ENCODE measurements at regions of chr10 and their contacts with region 1.

Region 1: DNA sequence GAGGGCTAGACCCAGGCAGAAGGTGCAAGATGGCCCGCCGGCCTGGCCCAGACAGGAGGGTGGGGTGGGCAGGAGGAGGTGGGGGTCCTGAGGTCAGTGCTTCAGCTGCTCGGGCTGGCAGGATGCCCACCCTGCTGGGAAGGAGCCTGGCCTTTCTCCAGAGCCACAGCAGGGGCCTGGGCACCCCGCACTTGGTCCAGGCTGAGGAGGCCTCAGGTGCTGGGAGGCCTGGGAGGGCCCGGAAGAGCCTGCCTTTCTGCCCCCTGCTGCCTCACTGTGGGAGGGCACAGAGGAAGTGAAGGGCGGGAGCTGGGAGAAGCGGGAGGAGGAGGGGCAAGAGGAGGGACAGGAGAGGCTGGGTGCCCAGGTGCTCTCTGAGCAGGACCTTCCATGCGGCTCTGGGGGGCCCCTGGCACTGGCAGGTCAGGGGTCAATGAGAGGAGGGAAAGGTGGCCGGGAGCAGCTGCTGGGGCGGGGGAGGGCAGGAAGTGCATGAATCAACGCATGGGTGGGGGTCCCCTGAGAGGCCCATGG is 49.7 kb downstream of the PWWP2B start:
- DNase-seq: peak; percentile 31 to 89 (median 73)
- ATAC-seq: peak; percentile 36
- H3K4me3 ChIP-seq: peak overlapping the region; percentile 43 to 53
- H3K4me3 Mint-ChIP-seq: peak overlapping the region; percentile 71
- H3K27ac ChIP-seq: peak overlapping the region; percentile 87 to 99
- H3K27ac Mint-ChIP-seq: peak overlapping the region; percentile 98
- H3K4me1 ChIP-seq: peaks cover 58% of the 10 kb centered on the region
- H3K4me1 Mint-ChIP-seq: peaks cover 52% of the 10 kb centered on the region
- H3K27me3 ChIP-seq: no peaks in the 10 kb centered on the region
- H3K27me3 Mint-ChIP-seq: no peaks in the 10 kb centered on the region
- CTCF ChIP-seq: peak; percentile 30

Region 2: GRCh38 chr10:132396495-132397035 is 50.2 kb before region 1 on chr10:
- CTCF ChIA-PET with region 1: interaction called, 5 read pairs
- POLR2A ChIA-PET with region 1: interaction called, 12 read pairs
- intact Hi-C with region 1: loop called in 1 of 2 experiments (anchors 1 kb)
- DNase-seq: peak in 8 of 9 experiments; percentile 49 to 87 (median 66)
- ATAC-seq: peak; percentile 72
- H3K4me3 ChIP-seq: peak overlapping the region; percentile 30 to 34
- H3K4me3 Mint-ChIP-seq: no peak overlapping the region
- H3K27ac ChIP-seq: peak overlapping the region; percentile 37 to 57
- H3K27ac Mint-ChIP-seq: no peak overlapping the region
- H3K4me1 ChIP-seq: peaks cover 12% of the 10 kb centered on the region
- H3K4me1 Mint-ChIP-seq: peaks cover 22% of the 10 kb centered on the region
- H3K27me3 ChIP-seq: no peaks in the 10 kb centered on the region
- H3K27me3 Mint-ChIP-seq: no peaks in the 10 kb centered on the region
- CTCF ChIP-seq: peak; percentile 17

Region 3: GRCh38 chr10:132421931-132422751 is 24.6 kb before region 1 on chr10:
- CTCF ChIA-PET with region 1: interaction called, 4 read pairs
- POLR2A ChIA-PET with region 1: no interaction called
- intact Hi-C with region 1: loop called in 1 of 2 experiments (anchors 2 kb)
- DNase-seq: peak in 1 of 9 experiments; percentile 24
- ATAC-seq: no peak
- H3K4me3 ChIP-seq: no peak overlapping the region
- H3K4me3 Mint-ChIP-seq: peak overlapping the region; percentile 33
- H3K27ac ChIP-seq: peak overlapping the region in 1 of 2 experiments; percentile 65
- H3K27ac Mint-ChIP-seq: peak overlapping the region; percentile 74
- H3K4me1 ChIP-seq: peaks cover 40% of the 10 kb centered on the region
- H3K4me1 Mint-ChIP-seq: peaks cover 31% of the 10 kb centered on the region
- H3K27me3 ChIP-seq: no peaks in the 10 kb centered on the region
- H3K27me3 Mint-ChIP-seq: no peaks in the 10 kb centered on the region
- CTCF ChIP-seq: no peak

Region 4: GRCh38 chr10:132961787-132962622 is 515.3 kb after region 1 on chr10:
- CTCF ChIA-PET with region 1: no interaction called
- POLR2A ChIA-PET with region 1: no interaction called
- intact Hi-C with region 1: no loop called
- DNase-seq: peak; percentile 30 to 80 (median 65)
- ATAC-seq: peak; percentile 82
- H3K4me3 ChIP-seq: peak overlapping the region; percentile 72 to 77
- H3K4me3 Mint-ChIP-seq: peak overlapping the region; percentile 98
- H3K27ac ChIP-seq: peak overlapping the region; percentile 22 to 46
- H3K27ac Mint-ChIP-seq: peak overlapping the region; percentile 62
- H3K4me1 ChIP-seq: peaks cover 8% of the 10 kb centered on the region
- H3K4me1 Mint-ChIP-seq: peaks cover 16% of the 10 kb centered on the region
- H3K27me3 ChIP-seq: no peaks in the 10 kb centered on the region
- H3K27me3 Mint-ChIP-seq: peaks cover 6% of the 10 kb centered on the region
- CTCF ChIP-seq: no peak